ENCODE measurements at regions of chr20 and their contacts with region 1.

Region 1: DNA sequence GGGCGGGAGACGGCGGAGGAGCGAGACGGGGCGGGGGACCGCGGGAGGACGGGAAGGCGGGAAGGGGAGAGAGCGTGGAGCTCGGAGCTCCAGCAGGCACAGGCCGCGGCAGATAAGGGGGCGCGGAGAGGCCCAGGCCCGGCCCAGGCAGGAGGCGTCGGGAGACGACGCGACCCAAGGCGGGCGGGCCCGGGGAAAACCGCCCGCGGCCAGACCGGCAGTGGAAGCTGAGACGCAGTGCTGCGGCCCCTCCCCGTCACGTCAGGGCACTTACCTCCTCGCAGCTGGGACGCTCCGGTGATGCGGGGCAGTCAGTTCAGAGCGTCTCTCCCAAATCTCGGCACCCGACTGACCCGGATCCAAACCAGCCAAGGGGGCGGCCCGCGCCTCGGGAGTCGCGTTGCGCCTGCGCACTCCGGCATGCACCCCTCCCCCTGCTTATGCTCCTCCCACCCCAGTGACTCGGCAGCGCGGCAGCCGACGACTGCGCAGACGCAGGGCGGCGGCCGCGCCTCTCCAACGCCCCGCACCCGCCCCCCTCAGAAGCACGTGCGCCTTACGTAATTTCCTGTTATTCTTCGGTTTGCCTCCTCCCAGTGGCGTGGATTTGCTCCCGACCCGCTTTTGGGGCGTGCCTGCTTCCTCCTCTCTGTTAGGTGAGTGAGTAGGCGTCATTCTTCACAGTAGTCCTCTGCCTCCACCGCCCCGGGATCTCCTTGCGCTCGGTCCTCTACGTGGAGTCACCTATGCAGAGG is at the start of gene OSER1:
- DNase-seq: peak; percentile 96 to 98 (median 97)
- H3K4me3 ChIP-seq: peak within 1 kb of the TSS; percentile 80 to 90 (median 86)
- H3K4me3 Mint-ChIP-seq: peak within 1 kb of the TSS; percentile 99 to 100
- H3K27ac ChIP-seq: peak within 1 kb of the TSS; percentile 85 to 93
- H3K27ac Mint-ChIP-seq: peak within 1 kb of the TSS; percentile 96 to 99 (median 98)
- H3K4me1 ChIP-seq: peaks cover 31 to 34% of the 10 kb centered on the region in 2 donors
- H3K4me1 Mint-ChIP-seq: peaks cover 48% of the 10 kb centered on the region
- H3K27me3 ChIP-seq: no peaks in the 10 kb centered on the region
- H3K27me3 Mint-ChIP-seq: peaks cover 0 to 2% (median 0%) of the 10 kb centered on the region in 3 donors
- CTCF ChIP-seq: no peak
- polyA plus RNA-seq, gene OSER1: 42.3 to 89.1 (median 45.1) TPM

Region 2: DNA sequence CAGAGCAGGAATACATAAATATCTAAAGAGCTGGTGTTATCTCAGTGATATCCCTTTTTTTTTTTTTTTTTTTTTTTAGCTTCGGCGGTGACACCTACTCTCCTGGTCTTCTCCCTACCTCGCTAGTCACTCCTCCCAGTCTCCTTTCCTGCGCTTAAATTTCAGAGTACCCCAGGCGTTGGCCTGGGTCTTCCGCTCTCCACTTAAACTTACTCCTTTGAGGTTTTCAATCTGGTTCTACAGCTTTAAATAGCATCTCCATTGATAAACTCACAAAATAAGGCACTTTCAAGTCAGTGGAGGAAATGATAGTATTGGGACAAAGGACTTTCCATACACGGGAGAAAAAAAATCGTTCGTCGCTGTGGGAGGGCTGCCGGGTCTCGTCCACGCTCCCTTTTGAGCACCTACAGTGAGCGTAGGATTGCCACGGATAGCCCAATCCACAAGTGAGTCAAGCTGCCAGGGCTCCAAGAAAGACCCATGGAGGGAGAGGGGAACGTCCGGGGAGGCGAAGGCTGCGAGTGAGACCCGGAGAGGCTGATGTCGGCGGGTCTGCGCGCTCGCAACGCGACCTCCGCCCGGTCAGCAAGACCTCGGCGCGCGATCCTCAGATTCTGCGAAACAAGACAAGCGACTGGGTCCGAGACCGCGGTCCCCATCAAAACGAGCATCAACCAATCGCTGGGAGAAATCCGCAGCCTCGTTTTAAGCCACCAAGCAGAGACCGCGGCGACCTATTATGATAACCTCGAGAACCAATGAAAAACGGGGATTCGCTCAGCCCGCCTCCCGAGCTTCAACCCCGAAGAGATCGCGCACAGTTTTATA is 753.6 kb before region 1 on chr20:
- intact Hi-C with region 1: loop called (anchors 5 kb)
- DNase-seq: peak; percentile 83 to 86 (median 83)
- H3K4me3 ChIP-seq: peak overlapping the region; percentile 80 to 86 (median 81)
- H3K4me3 Mint-ChIP-seq: peak overlapping the region; percentile 93 to 96
- H3K27ac ChIP-seq: peak overlapping the region; percentile 93 to 99
- H3K27ac Mint-ChIP-seq: peak overlapping the region; percentile 98 to 99 (median 99)
- H3K4me1 ChIP-seq: peaks cover 13 to 19% of the 10 kb centered on the region in 2 donors
- H3K4me1 Mint-ChIP-seq: peaks cover 23% of the 10 kb centered on the region
- H3K27me3 ChIP-seq: no peaks in the 10 kb centered on the region
- H3K27me3 Mint-ChIP-seq: peaks cover 9 to 15% (median 9%) of the 10 kb centered on the region in 3 donors
- CTCF ChIP-seq: no peak

Region 3: DNA sequence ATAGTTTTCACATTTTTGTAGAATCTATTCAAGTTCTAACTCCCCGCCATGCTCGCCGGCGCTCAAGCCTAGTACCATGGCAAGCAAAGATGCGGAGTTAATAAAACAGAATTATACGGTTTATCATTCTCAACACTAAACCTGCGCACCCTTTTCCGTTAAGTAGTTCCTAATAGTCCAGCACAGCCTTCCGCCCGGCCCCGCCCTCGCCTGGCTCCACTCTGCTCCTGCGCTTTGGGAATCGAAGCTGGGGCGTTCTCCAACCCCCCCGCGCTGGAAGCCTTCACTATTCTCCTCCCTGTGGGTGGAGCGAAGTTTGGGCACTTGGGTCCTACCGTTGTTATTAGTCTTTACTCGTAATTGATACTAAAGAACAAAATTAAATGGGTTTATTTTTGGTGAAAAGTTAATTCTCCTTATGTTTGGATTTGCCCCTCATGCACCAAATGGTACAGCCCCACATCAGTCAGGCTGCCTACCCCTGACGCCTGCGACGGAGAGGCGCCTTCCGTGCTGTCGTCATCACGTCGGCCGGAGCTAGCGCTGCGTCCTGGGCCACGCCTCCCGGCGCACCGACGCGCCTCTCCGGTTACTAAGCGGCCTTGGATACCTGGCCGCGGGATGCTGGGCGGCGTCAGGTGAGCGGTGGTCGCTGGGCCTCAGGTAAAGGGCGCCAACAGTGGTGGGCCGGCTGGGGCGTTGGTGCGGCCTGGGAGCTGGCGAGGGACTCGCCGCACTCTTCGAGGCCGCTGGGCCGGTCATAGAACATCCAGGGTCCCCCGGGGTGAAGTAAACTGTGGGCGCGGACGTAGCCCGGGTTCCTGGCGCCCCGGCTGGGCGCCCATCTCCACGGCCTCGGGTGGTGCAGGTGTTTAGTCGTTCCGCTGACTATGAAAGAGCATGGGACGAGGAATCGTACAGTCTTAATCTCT is 619.9 kb before region 1 on chr20 and contains the start of gene IFT52:
- intact Hi-C with region 1: loop called in 1 of 2 experiments (anchors 5 kb)
- DNase-seq: peak; percentile 85 to 90 (median 86)
- H3K4me3 ChIP-seq: peak within 1 kb of the TSS; percentile 82 to 86 (median 85)
- H3K4me3 Mint-ChIP-seq: peak within 1 kb of the TSS; percentile 85 to 93
- H3K27ac ChIP-seq: peak within 1 kb of the TSS; percentile 79 to 95
- H3K27ac Mint-ChIP-seq: peak within 1 kb of the TSS; percentile 93 to 99 (median 97)
- H3K4me1 ChIP-seq: peaks cover 13 to 14% of the 10 kb centered on the region in 2 donors
- H3K4me1 Mint-ChIP-seq: peaks cover 16% of the 10 kb centered on the region
- H3K27me3 ChIP-seq: no peaks in the 10 kb centered on the region
- H3K27me3 Mint-ChIP-seq: peaks cover 0 to 4% (median 0%) of the 10 kb centered on the region in 3 donors
- CTCF ChIP-seq: no peak
- polyA plus RNA-seq, gene IFT52: 17.6 to 28.1 (median 24.1) TPM

Region 4: DNA sequence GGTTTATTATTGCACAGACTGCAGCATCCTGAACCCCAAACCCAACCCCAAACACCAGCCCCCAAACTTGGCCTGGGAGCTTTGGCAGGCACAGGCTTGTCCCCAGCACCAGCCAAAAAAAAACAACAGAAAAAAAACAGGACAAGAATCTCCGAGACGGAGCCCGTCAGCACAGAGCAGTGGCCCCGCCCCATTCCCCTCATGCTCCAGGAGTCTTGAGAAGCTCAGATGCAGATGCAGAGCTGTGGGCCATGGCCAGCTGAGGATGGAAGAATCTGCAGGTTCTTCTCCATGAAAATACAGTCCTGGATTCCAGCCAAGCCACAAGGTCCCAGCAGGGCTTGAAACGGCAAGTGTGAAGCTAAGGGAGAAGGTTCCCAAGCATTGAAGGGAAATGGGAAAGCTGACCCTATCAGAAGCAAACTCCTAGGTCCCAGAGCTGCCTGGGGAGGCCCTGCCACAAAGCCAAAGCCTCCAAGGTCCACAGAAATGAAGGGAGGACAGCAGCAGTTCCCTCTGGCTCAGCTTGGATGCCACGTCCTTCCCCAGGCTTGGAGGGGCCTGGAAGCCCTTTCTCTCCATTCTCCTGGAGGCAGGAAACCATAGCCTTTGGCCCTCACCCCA is 98.8 kb before region 1 on chr20:
- intact Hi-C with region 1: no loop called
- DNase-seq: no peak
- H3K4me3 ChIP-seq: no peak overlapping the region
- H3K4me3 Mint-ChIP-seq: no peak overlapping the region
- H3K27ac ChIP-seq: no peak overlapping the region
- H3K27ac Mint-ChIP-seq: no peak overlapping the region
- H3K4me1 ChIP-seq: no peaks in the 10 kb centered on the region
- H3K4me1 Mint-ChIP-seq: no peaks in the 10 kb centered on the region
- H3K27me3 ChIP-seq: peaks cover 3 to 18% of the 10 kb centered on the region in 2 donors
- H3K27me3 Mint-ChIP-seq: peaks cover 23 to 41% (median 36%) of the 10 kb centered on the region in 3 donors
- CTCF ChIP-seq: no peak

Region 5: DNA sequence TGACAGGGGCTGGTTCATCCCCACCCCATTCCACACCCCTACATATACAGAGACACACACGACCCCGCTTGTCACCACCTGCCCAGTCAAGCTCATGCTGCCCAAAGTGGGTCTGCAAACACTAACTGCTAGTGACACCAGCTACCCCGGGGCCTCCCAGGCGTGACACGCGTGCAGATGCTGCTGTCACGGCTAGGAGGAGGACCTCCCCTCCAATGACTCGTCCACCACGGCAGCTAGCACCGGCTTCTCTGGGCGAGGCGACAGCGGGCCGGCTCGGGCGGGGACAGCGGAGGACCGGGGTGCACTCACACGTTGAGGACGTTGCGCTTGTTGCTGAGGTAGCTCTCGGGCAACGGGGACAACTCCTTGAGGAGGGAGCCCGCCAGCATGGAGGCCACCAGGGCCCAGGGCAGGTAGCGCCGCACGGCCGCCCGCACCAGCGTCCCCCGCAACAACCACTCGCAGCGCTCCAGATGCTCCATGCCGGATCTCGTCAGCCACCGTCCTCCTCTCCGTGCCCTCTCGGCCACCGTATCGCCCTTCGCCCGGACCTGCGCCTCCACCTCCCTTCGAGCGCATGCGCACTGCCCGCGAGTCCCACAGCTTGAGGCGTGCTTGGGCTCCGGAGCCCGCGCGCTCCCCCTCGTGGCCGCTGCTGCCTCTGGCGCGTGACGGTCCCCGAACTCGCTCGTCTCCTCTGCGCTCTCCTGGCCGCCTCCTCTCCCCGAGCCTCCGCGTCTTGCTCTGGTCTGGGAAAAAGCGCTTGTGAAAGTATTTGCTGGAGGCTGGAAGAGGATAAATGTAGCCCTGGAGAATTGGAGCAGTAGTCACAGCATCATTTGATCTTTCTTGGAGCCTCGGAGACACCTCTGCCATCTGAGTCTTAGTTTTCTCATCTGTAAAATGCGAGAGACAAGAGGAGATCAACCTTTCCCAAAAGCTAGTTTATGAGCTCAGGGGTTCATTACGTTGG is 100.4 kb after region 1 on chr20 and contains the start of gene FITM2:
- intact Hi-C with region 1: loop called in 1 of 2 experiments (anchors 2 kb)
- DNase-seq: peak; percentile 93 to 97 (median 97)
- H3K4me3 ChIP-seq: peak within 1 kb of the TSS; percentile 61 to 89 (median 82)
- H3K4me3 Mint-ChIP-seq: peak within 1 kb of the TSS; percentile 83 to 91
- H3K27ac ChIP-seq: peak within 1 kb of the TSS in 1 of 2 donors; percentile 73
- H3K27ac Mint-ChIP-seq: peak within 1 kb of the TSS; percentile 41 to 85 (median 74)
- H3K4me1 ChIP-seq: peaks cover 16 to 23% of the 10 kb centered on the region in 2 donors
- H3K4me1 Mint-ChIP-seq: peaks cover 16% of the 10 kb centered on the region
- H3K27me3 ChIP-seq: peaks cover 0 to 7% of the 10 kb centered on the region in 2 donors
- H3K27me3 Mint-ChIP-seq: peaks cover 8 to 14% (median 9%) of the 10 kb centered on the region in 3 donors
- CTCF ChIP-seq: peak; percentile 90
- polyA plus RNA-seq, gene FITM2: 0.32 to 2.2 (median 0.69) TPM

Region 6: DNA sequence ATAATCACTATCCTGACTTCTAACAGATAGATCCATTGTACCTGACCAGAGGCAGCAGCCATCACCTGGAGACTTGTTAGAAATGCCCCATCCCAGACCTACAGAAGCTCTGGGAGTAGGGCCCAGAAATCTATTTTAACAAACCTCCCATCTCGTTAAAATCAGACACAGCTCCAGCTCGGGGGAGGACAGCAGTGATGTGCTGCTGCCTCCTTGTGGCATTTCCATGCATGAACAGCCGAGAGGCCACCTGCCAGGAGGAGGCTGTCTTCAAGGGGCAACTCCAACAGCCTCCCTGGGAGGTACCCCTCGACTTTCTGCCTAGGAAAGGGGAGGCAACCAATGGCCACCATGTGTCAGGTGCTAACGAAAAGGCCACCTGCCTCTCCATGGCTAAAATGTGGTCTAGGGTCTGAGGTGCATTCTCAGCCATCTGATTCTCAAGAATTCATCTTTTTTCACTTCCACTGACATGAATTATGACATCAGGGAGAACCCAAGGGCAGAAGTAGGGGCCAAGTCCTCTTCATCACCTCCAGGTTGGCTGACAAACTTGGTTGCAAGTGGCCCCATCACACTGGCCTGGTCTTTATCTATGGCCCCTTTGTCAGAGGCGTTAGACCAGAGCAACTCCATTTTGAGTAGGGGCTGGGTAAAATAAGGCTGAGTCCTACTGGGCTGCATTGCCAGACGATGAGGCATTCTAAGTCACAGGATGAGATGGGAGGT is 522.9 kb after region 1 on chr20:
- intact Hi-C with region 1: loop called (anchors 10 kb)
- DNase-seq: peak; percentile 15 to 51 (median 37)
- H3K4me3 ChIP-seq: no peak overlapping the region
- H3K4me3 Mint-ChIP-seq: no peak overlapping the region
- H3K27ac ChIP-seq: no peak overlapping the region
- H3K27ac Mint-ChIP-seq: peak overlapping the region in 1 of 7 donors; percentile 36
- H3K4me1 ChIP-seq: peaks cover 6 to 7% of the 10 kb centered on the region in 2 donors
- H3K4me1 Mint-ChIP-seq: peaks cover 15% of the 10 kb centered on the region
- H3K27me3 ChIP-seq: no peaks in the 10 kb centered on the region
- H3K27me3 Mint-ChIP-seq: peaks cover 0 to 6% (median 2%) of the 10 kb centered on the region in 3 donors
- CTCF ChIP-seq: peak; percentile 77

Region 7: DNA sequence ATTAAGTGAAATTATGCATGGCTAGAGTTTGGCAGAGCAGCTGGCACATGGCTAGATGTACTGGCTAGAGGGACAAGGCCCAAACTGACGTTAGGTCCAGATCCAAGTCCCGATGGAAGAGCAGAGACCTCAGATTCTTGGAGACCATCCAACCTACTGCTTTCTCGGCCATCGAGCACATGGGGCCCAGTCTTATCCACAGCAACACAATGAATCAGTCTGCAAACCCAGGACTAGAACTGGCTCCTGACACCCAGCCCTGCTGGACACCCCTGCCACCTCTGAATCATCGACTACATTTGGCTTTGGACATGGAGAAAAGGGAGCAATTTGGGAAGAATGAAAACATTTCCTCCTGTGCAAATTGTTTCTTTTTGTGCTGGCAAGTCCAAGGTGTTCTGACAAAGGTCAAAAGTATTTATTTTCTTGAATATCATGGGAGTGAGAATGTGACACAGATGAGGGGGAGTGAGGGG is 651.0 kb after region 1 on chr20:
- intact Hi-C with region 1: loop called in 1 of 2 experiments (anchors 10 kb)
- DNase-seq: no peak
- H3K4me3 ChIP-seq: no peak overlapping the region
- H3K4me3 Mint-ChIP-seq: no peak overlapping the region
- H3K27ac ChIP-seq: no peak overlapping the region
- H3K27ac Mint-ChIP-seq: no peak overlapping the region
- H3K4me1 ChIP-seq: peaks cover 0 to 4% of the 10 kb centered on the region in 2 donors
- H3K4me1 Mint-ChIP-seq: peaks cover 4% of the 10 kb centered on the region
- H3K27me3 ChIP-seq: no peaks in the 10 kb centered on the region
- H3K27me3 Mint-ChIP-seq: peaks cover 3 to 13% (median 3%) of the 10 kb centered on the region in 3 donors
- CTCF ChIP-seq: no peak

Region 8: GRCh38 chr20:44885392-44886265 is 675.0 kb after region 1 on chr20 and contains the start of gene YWHAB:
- intact Hi-C with region 1: loop called in 1 of 2 experiments (anchors 10 kb)
- DNase-seq: peak; percentile 93 to 97 (median 96)
- H3K4me3 ChIP-seq: peak within 1 kb of the TSS; percentile 88 to 98 (median 92)
- H3K4me3 Mint-ChIP-seq: peak within 1 kb of the TSS; percentile 94 to 96
- H3K27ac ChIP-seq: peak within 1 kb of the TSS; percentile 89 to 94
- H3K27ac Mint-ChIP-seq: peak within 1 kb of the TSS; percentile 89 to 98 (median 94)
- H3K4me1 ChIP-seq: peaks cover 40 to 55% of the 10 kb centered on the region in 2 donors
- H3K4me1 Mint-ChIP-seq: peaks cover 49% of the 10 kb centered on the region
- H3K27me3 ChIP-seq: no peaks in the 10 kb centered on the region
- H3K27me3 Mint-ChIP-seq: no peaks in the 10 kb centered on the region
- CTCF ChIP-seq: peak; percentile 35
- polyA plus RNA-seq, gene YWHAB: 126 to 654 (median 504) TPM

Measured in CD14-positive monocyte (primary cell).